Dendritic cell treated with granulocyte-macrophage colony-stimulating factor and Interleukin-4, amounts not matched to agents 40 ng/mL and 50 ng/mL, for 4 days (primary cell): ENCODE measurements at regions of chr1 and their contacts with region 1.

Region 1: DNA sequence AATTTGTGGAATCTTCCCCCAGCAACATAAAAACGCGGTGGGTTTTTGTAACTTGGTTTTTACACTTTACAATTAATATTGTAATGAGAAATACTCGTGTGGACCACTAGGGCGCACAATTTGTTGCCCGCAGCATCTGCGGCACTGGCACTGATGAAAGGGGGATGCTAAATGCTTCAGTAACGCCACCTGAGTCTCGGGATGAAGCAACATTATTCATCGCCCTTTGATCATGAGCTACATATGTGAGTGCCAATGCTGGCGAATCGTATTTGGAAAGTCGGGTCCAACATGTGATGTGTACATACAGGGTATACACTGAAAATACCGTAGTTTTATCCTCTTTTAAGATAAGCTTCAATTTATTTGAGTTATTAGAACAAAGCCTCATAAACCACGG is 34.2 kb upstream of the COX20 start:
- H3K4me3 Mint-ChIP-seq: no peak overlapping the region
- H3K27ac Mint-ChIP-seq: no peak overlapping the region
- H3K4me1 Mint-ChIP-seq: peaks cover 5% of the 10 kb centered on the region
- H3K27me3 Mint-ChIP-seq: peaks cover 15% of the 10 kb centered on the region

Region 2: GRCh38 chr1:244599937-244600350 is 201.3 kb before region 1 on chr1:
- intact Hi-C with region 1: loop called (anchors 1 kb)
- H3K4me3 Mint-ChIP-seq: no peak overlapping the region
- H3K27ac Mint-ChIP-seq: no peak overlapping the region
- H3K4me1 Mint-ChIP-seq: peaks cover 28% of the 10 kb centered on the region
- H3K27me3 Mint-ChIP-seq: peaks cover 1% of the 10 kb centered on the region